ENCODE measurements at regions of chr12 and their contacts with region 1.

Region 1: GRCh38 chr12:68841717-68842116 is 33.7 kb downstream of the MDM2 start:
- DNase-seq: no peak
- ATAC-seq: no peak
- H3K4me3 Mint-ChIP-seq: no peak overlapping the region
- H3K27ac Mint-ChIP-seq: no peak overlapping the region
- H3K4me1 Mint-ChIP-seq: peaks cover 3% of the 10 kb centered on the region
- H3K27me3 Mint-ChIP-seq: no peaks in the 10 kb centered on the region

Region 2: GRCh38 chr12:68831272-68831671 is 10.4 kb before region 1 on chr12:
- CTCF ChIA-PET with region 1: interaction called, 14 read pairs
- POLR2A ChIA-PET with region 1: interaction called, 5 read pairs
- DNase-seq: no peak
- ATAC-seq: no peak
- H3K4me3 Mint-ChIP-seq: no peak overlapping the region
- H3K27ac Mint-ChIP-seq: no peak overlapping the region
- H3K4me1 Mint-ChIP-seq: peaks cover 9% of the 10 kb centered on the region
- H3K27me3 Mint-ChIP-seq: no peaks in the 10 kb centered on the region

Region 3: GRCh38 chr12:68856510-68856909 is 14.8 kb after region 1 on chr12:
- CTCF ChIA-PET with region 1: no interaction called
- POLR2A ChIA-PET with region 1: no interaction called
- DNase-seq: no peak
- ATAC-seq: no peak
- H3K4me3 Mint-ChIP-seq: no peak overlapping the region
- H3K27ac Mint-ChIP-seq: no peak overlapping the region
- H3K4me1 Mint-ChIP-seq: no peaks in the 10 kb centered on the region
- H3K27me3 Mint-ChIP-seq: peaks cover 9% of the 10 kb centered on the region

Region 4: DNA sequence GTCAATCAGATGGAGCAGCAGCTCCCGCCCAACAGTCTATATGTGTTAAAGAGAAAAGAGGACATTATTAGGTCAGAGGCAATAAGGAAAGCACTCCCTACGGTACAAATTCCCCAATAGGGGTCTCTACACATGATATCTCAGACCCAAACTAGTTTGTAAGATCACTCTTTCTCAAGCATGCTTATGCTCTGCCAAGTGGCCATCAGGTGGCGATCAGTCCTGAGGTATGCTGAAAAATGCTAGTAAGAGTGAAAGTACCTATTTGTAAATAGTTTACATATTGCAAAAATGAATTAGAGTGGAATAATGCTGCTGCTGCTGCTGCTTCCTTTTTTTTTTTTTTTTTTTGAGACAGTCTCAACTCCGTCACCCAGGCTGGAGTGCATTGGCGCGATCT is 30.2 kb after region 1 on chr12:
- CTCF ChIA-PET with region 1: no interaction called
- POLR2A ChIA-PET with region 1: no interaction called
- DNase-seq: no peak
- ATAC-seq: no peak
- H3K4me3 Mint-ChIP-seq: no peak overlapping the region
- H3K27ac Mint-ChIP-seq: no peak overlapping the region
- H3K4me1 Mint-ChIP-seq: peaks cover 3% of the 10 kb centered on the region
- H3K27me3 Mint-ChIP-seq: peaks cover 5% of the 10 kb centered on the region

Region 5: DNA sequence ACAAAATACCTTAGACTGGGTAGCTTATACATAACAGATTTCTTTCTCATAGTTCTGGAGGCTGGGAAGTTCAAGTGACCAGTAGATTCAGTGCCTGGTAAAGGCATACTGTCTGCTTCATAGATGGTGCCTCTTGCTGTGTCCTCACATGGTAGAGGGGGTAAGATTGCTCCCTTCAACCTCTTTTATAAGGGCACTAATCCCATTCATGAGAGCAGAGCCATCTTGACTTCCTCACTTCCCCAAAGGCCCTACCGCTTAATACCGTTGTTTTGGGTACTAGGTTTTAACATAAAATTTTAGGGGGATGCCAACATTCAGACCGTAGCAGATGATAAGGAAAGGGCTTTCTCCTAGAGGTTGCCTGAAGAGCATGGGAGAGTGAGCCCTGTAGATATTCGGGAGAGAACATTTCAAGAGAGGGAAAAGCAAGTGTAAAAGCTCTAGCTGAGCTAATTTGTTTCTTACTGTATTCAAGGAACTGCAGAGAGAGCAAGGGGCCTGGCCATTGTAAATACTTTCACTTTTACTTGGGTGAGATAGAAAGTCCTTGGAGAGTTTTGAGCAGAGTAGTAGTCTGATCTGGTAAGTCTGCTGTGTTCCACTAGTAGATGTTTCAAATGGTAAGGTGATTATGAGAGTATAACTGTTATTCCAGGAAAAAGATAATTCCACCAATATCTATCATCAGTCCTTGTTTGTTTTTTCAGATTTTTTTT is 655.8 kb after region 1 on chr12:
- CTCF ChIA-PET with region 1: no interaction called
- POLR2A ChIA-PET with region 1: no interaction called
- DNase-seq: peak; percentile 30
- ATAC-seq: peak; percentile 93
- H3K4me3 Mint-ChIP-seq: peak overlapping the region; percentile 2
- H3K27ac Mint-ChIP-seq: peak overlapping the region; percentile 67
- H3K4me1 Mint-ChIP-seq: peaks cover 17% of the 10 kb centered on the region
- H3K27me3 Mint-ChIP-seq: no peaks in the 10 kb centered on the region

Measured in activated CD8-positive, alpha-beta T cell treated with anti-CD3 and anti-CD28 coated beads, Interleukin-2, amount 10 ng/mL, durations not matched to agents 7 days and 5 days (primary cell).